CD8-positive, alpha-beta T cell (primary cell): ENCODE measurements at regions of chr3 and their contacts with region 1.

Region 1: GRCh38 chr3:52455283-52456168 is at the start of gene NISCH:
- DNase-seq: peak; percentile 92 to 99 (median 96)
- ATAC-seq: peak; percentile 94
- H3K4me3 ChIP-seq: peak within 1 kb of the TSS; percentile 86 to 97
- H3K4me3 Mint-ChIP-seq: peak within 1 kb of the TSS; percentile 91
- H3K27ac ChIP-seq: peak within 1 kb of the TSS; percentile 90 to 97
- H3K27ac Mint-ChIP-seq: peak within 1 kb of the TSS; percentile 99
- H3K4me1 ChIP-seq: peaks cover 26% of the 10 kb centered on the region
- H3K4me1 Mint-ChIP-seq: peaks cover 43% of the 10 kb centered on the region
- H3K27me3 ChIP-seq: no peaks in the 10 kb centered on the region
- H3K27me3 Mint-ChIP-seq: no peaks in the 10 kb centered on the region
- CTCF ChIP-seq: no peak
- total RNA-seq, gene NISCH: 150 to 163 TPM

Region 2: GRCh38 chr3:52536369-52537164 is 81.0 kb after region 1 on chr3 and contains the start of gene UQCC5:
- CTCF ChIA-PET with region 1: no interaction called
- POLR2A ChIA-PET with region 1: interaction called, 3 read pairs
- intact Hi-C with region 1: loop called (anchors 1 to 2 kb)
- DNase-seq: peak; percentile 92 to 99 (median 95)
- ATAC-seq: peak; percentile 88
- H3K4me3 ChIP-seq: peak within 1 kb of the TSS; percentile 79 to 88
- H3K4me3 Mint-ChIP-seq: peak within 1 kb of the TSS; percentile 99
- H3K27ac ChIP-seq: peak within 1 kb of the TSS; percentile 82 to 83
- H3K27ac Mint-ChIP-seq: peak within 1 kb of the TSS; percentile 98
- H3K4me1 ChIP-seq: peaks cover 41% of the 10 kb centered on the region
- H3K4me1 Mint-ChIP-seq: peaks cover 55% of the 10 kb centered on the region
- H3K27me3 ChIP-seq: peaks cover 0 to 8% of the 10 kb centered on the region in 2 experiments
- H3K27me3 Mint-ChIP-seq: no peaks in the 10 kb centered on the region
- CTCF ChIP-seq: no peak
- total RNA-seq, gene UQCC5: 5.2 to 6.8 TPM

Region 3: GRCh38 chr3:53730576-53730975 is 1275.0 kb after region 1 on chr3:
- CTCF ChIA-PET with region 1: no interaction called
- POLR2A ChIA-PET with region 1: no interaction called
- intact Hi-C with region 1: no loop called
- DNase-seq: no peak
- ATAC-seq: no peak
- H3K4me3 ChIP-seq: no peak overlapping the region
- H3K4me3 Mint-ChIP-seq: no peak overlapping the region
- H3K27ac ChIP-seq: no peak overlapping the region
- H3K27ac Mint-ChIP-seq: no peak overlapping the region
- H3K4me1 ChIP-seq: no peaks in the 10 kb centered on the region
- H3K4me1 Mint-ChIP-seq: no peaks in the 10 kb centered on the region
- H3K27me3 ChIP-seq: no peaks in the 10 kb centered on the region
- H3K27me3 Mint-ChIP-seq: peaks cover 18% of the 10 kb centered on the region
- CTCF ChIP-seq: no peak